ENCODE measurements at regions of chr16 and their contacts with region 1.

Region 1: GRCh38 chr16:46920402-46921068 is 36.4 kb downstream of the GPT2 start:
- DNase-seq: no peak
- ATAC-seq: no peak
- H3K4me3 ChIP-seq: no peak overlapping the region
- H3K27ac ChIP-seq: peak overlapping the region in 3 of 4 donors; percentile 31 to 44 (median 34)
- H3K4me1 ChIP-seq: peaks cover 14 to 24% of the 10 kb centered on the region in 2 donors
- H3K27me3 ChIP-seq: no peaks in the 10 kb centered on the region
- CTCF ChIP-seq: no peak
- POLR2A ChIP-seq: no peak

Region 2: DNA sequence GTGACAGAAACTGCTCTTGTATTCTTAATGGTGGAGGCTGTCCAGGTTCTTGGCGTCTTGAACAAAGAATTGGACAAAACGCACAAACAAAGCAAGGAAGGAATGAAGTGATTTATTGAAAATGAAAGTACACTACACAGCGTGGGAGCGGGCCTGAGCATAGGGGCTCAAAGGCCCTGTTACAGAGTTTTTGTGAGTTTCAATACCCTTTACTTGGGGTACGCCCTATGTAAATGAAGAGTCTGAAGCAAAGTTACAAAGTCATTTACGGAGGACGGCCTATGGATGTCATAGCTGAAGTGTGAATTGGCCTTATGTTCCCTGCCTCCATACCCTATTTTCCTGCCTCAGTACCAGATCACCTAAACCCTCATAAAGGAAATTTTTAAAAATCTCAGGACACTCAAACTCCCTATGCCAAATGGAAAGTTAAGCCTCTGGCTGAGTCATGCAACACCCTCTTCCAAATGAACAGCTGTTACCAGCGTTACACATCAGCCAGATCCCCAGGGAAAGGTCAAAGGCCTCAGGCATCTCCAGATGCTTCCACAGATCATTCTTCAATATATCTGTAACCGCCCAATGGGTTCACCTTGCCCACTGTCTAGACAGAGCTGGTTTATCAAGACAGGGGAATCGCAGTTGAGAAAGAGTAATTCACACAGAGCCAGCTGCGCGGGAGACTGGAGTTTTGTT is 270.5 kb before region 1 on chr16:
- in situ Hi-C with region 1: loop called in 1 of 4 experiments (anchors 25 kb)
- intact Hi-C with region 1: loop called (anchors 5 kb)
- DNase-seq: peak; percentile 41 to 74
- ATAC-seq: peak; percentile 88 to 89
- H3K4me3 ChIP-seq: peak overlapping the region; percentile 43 to 56 (median 47)
- H3K27ac ChIP-seq: peak overlapping the region; percentile 86 to 94 (median 90)
- H3K4me1 ChIP-seq: peaks cover 4 to 6% of the 10 kb centered on the region in 2 donors
- H3K27me3 ChIP-seq: no peaks in the 10 kb centered on the region
- CTCF ChIP-seq: no peak
- POLR2A ChIP-seq: no peak

Region 3: DNA sequence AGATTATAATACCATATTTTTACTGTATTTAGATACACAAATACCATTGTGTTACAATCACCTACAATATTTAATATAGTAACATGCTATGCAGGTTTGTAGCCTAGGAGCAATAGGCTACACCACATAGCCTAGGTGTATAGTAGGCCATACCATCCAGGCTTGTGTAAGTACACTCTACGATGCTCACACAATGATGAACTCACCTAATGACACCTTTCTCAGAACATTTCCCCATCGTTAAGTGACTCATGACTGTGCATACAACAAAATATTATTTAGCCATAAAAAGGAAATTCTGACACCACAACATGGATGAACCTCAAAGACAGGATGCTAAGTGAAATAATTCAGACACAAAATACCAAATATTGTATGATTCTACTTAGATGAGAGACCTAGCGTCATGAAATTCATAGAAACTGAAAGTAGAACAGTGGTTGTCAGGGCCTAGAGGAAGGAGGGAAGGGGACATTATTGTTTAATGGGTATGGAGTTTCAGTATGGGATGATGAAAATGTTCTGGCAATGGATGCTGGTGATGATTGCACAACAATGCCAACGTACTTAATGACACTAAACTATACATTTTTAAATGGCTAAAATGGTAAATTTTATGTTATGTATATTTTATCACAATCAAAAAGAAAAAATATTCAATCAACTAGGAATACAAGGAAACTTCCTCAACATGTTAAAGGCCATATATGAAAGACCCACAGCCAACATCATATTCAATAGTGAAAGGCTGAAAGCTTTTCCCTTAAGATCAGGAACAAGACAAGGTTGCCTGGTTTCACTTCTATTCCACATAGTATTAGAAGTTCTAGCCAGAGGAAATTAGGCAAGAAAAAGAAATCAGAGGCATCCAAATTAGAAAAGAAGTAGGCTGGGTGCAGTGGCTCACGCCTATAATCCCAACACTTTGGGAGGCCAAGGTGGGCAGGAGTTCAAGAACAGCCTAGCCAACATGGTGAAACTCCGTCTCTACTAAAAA is 83.7 kb before region 1 on chr16:
- in situ Hi-C with region 1: no loop called
- intact Hi-C with region 1: no loop called
- DNase-seq: no peak
- ATAC-seq: no peak
- H3K4me3 ChIP-seq: no peak overlapping the region
- H3K27ac ChIP-seq: no peak overlapping the region
- H3K4me1 ChIP-seq: peaks cover 0 to 2% of the 10 kb centered on the region in 2 donors
- H3K27me3 ChIP-seq: no peaks in the 10 kb centered on the region
- CTCF ChIP-seq: no peak
- POLR2A ChIP-seq: no peak

Region 4: DNA sequence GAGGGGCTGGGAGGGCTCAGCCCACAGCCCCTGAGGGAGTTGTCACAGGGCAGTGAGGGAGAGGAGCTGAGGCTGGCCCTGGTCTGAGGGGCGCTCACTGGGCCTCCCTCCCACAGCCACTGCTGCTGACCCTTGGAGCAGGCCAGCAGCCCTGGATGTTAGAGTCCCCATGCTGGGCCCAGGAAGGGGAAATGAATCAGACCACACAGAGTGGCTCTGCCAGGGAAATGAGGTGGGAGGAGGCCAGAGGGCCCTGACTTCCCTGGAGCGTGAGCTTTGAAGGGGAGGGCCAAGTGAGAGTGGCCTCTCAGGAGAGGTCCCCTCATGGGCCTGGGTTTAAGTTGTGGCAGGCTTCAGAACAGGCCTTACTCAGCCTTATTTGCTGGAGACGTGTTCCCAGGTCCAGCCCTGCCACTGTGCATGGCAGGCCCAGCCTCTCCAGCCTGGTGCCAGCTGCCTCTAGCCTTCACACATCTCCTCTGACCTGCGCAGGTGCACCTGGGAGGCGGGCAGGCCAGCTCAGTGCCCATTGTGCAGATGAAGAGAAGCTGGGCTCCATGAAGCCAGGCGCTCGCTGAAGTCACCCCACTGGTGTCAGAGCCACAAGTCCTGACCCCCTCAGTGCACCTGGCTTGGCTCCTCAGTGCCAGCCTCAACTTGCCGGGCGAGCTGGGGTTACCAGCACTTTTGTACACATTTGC is 20.9 kb before region 1 on chr16:
- in situ Hi-C with region 1: no loop called
- intact Hi-C with region 1: loop called (anchors 1 kb)
- DNase-seq: no peak
- ATAC-seq: no peak
- H3K4me3 ChIP-seq: no peak overlapping the region
- H3K27ac ChIP-seq: peak overlapping the region; percentile 48 to 63 (median 56)
- H3K4me1 ChIP-seq: peaks cover 28 to 39% of the 10 kb centered on the region in 2 donors
- H3K27me3 ChIP-seq: no peaks in the 10 kb centered on the region
- CTCF ChIP-seq: no peak
- POLR2A ChIP-seq: no peak